Ascending aorta (tissue), 2 donors: ENCODE measurements at regions of chr12 and their contacts with region 1.

Region 1: DNA sequence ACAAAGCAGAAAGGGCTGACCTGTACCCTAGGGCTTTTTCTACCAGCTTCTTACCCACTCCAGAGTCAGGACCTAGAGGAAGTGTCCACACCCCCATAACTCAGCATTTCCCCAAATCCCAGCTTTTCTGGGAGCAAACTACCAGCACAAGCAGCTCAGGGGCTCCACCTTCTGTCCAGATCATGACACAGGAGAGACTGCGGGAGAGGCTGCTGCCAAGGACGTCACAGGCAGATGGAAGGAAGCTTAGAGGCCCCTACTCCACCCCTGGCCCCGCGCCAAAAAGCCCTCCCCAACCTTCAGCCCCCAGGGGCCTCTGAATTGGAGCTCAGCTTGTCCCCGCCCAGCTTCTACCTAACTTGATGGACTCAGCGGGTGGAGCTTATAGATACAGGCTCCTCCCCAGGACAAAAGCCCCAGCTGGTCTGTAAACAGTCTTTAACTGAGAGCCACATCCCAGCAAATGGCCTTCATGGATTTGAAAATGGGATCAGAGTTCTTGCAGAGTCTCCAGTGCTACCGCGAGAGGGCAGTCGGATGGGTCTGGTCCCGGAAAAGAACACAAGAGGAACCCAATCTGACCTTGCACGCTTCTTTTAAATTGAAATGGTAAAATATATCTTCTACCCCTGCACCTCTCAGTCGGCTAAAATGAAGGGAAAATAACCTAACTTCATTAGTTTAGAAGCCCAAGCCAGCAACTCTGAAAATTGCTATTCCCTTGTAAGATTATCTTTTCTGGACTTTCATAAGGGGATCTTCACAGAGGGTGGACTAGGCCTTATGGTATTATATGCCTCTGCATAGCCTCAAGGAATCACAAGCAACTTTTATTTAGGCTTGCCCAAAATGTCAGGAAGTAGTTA is 6.8 kb upstream of the BAZ2A start:
- DNase-seq: peak; percentile 99 to 100
- H3K4me3 ChIP-seq: peak overlapping the region; percentile 78 to 93
- H3K27ac ChIP-seq: peak overlapping the region; percentile 82 to 95
- H3K4me1 ChIP-seq: peaks cover 11 to 30% of the 10 kb centered on the region in 2 donors
- H3K27me3 ChIP-seq: no peaks in the 10 kb centered on the region
- CTCF ChIP-seq: peak; percentile 30 to 68 (median 53)

Region 2: DNA sequence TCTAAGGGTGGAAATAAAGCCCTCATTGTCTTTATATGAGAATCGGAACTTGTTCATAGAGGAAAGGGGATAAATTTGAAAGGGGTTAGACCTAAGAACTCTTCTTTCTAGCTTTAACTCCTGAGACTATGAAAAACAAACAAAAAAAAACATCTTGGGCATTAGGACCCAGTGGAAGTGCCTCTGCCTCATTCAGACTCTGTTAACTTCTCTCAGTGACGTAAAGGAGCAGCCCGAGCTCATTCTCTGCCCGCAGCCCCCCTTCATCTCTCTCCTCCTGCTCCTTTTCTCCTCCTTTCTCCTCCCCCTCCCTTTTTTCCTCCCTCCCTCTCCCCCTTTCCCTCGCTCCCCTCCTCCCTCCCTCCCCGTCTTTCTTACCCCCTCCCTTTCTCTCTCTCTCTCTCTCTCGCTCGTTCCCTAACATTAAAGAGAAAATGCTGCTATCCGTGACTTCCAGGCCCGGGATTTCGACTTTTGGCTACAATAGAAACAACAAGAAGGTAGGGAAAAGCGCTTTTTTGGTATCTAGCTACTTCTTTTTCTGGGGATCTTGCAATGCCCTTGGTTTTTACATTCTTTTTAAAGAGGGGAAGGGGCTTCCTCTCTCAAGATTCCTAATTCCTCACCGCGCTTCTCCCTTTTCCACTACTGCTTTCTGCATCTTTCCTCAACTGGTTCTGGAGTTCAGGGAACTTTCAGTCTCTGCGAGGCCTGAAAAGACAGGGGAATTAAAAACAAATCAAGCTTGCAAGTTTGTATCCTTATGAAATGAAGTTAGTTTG is 115.1 kb before region 1 on chr12 and contains the start of gene RBMS2:
- intact Hi-C with region 1: loop called (anchors 2 kb)
- DNase-seq: peak; percentile 77 to 93
- H3K4me3 ChIP-seq: peak within 1 kb of the TSS; percentile 64 to 71
- H3K27ac ChIP-seq: peak within 1 kb of the TSS; percentile 78 to 88
- H3K4me1 ChIP-seq: peaks cover 0 to 35% of the 10 kb centered on the region in 2 donors
- H3K27me3 ChIP-seq: no peaks in the 10 kb centered on the region
- CTCF ChIP-seq: no peak
- total RNA-seq, gene RBMS2: 21.3 TPM

Region 3: GRCh38 chr12:56688129-56688845 is 51.4 kb after region 1 on chr12 and contains the start of gene PTGES3:
- intact Hi-C with region 1: loop called (anchors 2 kb)
- DNase-seq: peak; percentile 93 to 99
- H3K4me3 ChIP-seq: peak within 1 kb of the TSS; percentile 87 to 92
- H3K27ac ChIP-seq: peak within 1 kb of the TSS; percentile 99 to 100
- H3K4me1 ChIP-seq: peaks cover 8 to 22% of the 10 kb centered on the region in 2 donors
- H3K27me3 ChIP-seq: no peaks in the 10 kb centered on the region
- CTCF ChIP-seq: no peak
- total RNA-seq, gene PTGES3: 62.2 TPM